GM10248 (cell line): ENCODE measurements at regions of chr1 and their contacts with region 1.

Region 1: GRCh38 chr1:108734171-108734865 is 12.2 kb upstream of the STXBP3 start:
- DNase-seq: no peak
- CTCF ChIP-seq: no peak

Region 2: GRCh38 chr1:108722292-108722691 is 12.0 kb before region 1 on chr1:
- CTCF ChIA-PET with region 1: interaction called, 12 read pairs
- POLR2A ChIA-PET with region 1: no interaction called
- DNase-seq: no peak
- CTCF ChIP-seq: no peak

Region 3: GRCh38 chr1:108746372-108747205 is 12.3 kb after region 1 on chr1 and contains the start of gene STXBP3:
- CTCF ChIA-PET with region 1: interaction called, 12 read pairs
- POLR2A ChIA-PET with region 1: no interaction called
- DNase-seq: peak; percentile 98
- CTCF ChIP-seq: peak; percentile 98